ENCODE measurements at regions of chr3 and their contacts with region 1.

Region 1: GRCh38 chr3:52238761-52239701 is at the start of gene TWF2:
- DNase-seq: peak; percentile 95
- total RNA-seq, gene TWF2: 40.0 to 51.0 TPM

Region 2: GRCh38 chr3:52278510-52279069 is 39.6 kb after region 1 on chr3 and contains the start of gene WDR82:
- intact Hi-C with region 1: loop called in 1 of 2 experiments (anchors 5 kb)
- DNase-seq: peak; percentile 99
- total RNA-seq, gene WDR82: 58.4 to 72.6 TPM

Region 3: DNA sequence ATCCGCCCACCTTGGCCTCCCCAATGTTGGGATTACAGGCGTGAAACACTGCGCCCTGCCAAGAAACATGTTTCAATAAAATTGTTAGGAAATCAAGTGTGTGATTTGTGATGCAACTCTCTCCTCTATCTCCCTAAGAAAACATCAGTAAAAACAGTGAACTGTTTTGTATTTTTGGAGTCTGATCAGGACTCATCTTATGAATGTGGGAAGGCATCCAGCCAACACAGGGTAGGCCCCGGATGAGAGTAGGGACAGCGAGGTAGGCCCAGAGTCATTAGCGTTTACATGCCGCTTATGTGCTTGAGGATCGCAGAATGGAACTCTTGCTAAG is 47.7 kb after region 1 on chr3:
- intact Hi-C with region 1: loop called in 1 of 2 experiments (anchors 5 kb)
- DNase-seq: no peak